CD8-positive, alpha-beta T cell (primary cell): ENCODE measurements at regions of chr1 and their contacts with region 1.

Region 1: GRCh38 chr1:19128968-19129514 is 81.0 kb downstream of the UBR4 start:
- DNase-seq: no peak
- ATAC-seq: no peak
- H3K4me3 ChIP-seq: no peak overlapping the region
- H3K4me3 Mint-ChIP-seq: no peak overlapping the region
- H3K27ac ChIP-seq: no peak overlapping the region
- H3K27ac Mint-ChIP-seq: no peak overlapping the region
- H3K4me1 ChIP-seq: peaks cover 9% of the 10 kb centered on the region
- H3K4me1 Mint-ChIP-seq: peaks cover 11% of the 10 kb centered on the region
- H3K27me3 ChIP-seq: no peaks in the 10 kb centered on the region
- H3K27me3 Mint-ChIP-seq: no peaks in the 10 kb centered on the region
- CTCF ChIP-seq: no peak

Region 2: DNA sequence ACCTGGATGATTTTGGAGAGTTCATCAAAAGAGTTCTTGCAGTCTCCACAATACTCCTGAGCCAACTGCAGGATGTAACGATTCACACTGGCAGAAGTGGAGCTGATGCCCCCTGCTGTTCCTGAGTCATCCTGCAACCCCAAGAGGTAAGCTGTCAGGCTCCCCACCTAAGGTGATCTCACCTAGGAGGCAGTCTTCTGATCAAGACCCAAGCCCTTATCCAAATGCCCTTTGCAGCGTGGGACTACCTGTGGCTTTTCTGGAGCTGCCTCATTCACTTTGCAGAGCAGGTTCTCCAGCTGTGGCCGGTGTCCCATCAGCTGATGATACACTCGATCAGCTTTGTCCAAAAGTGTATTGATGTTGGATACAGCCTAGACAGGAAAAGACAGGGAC is 15.3 kb before region 1 on chr1:
- CTCF ChIA-PET with region 1: interaction called, 10 read pairs
- POLR2A ChIA-PET with region 1: interaction called, 6 read pairs
- intact Hi-C with region 1: no loop called
- DNase-seq: peak in 7 of 9 experiments; percentile 8 to 54 (median 36)
- ATAC-seq: peak; percentile 65
- H3K4me3 ChIP-seq: no peak overlapping the region
- H3K4me3 Mint-ChIP-seq: no peak overlapping the region
- H3K27ac ChIP-seq: no peak overlapping the region
- H3K27ac Mint-ChIP-seq: no peak overlapping the region
- H3K4me1 ChIP-seq: no peaks in the 10 kb centered on the region
- H3K4me1 Mint-ChIP-seq: no peaks in the 10 kb centered on the region
- H3K27me3 ChIP-seq: no peaks in the 10 kb centered on the region
- H3K27me3 Mint-ChIP-seq: no peaks in the 10 kb centered on the region
- CTCF ChIP-seq: peak; percentile 36

Region 3: DNA sequence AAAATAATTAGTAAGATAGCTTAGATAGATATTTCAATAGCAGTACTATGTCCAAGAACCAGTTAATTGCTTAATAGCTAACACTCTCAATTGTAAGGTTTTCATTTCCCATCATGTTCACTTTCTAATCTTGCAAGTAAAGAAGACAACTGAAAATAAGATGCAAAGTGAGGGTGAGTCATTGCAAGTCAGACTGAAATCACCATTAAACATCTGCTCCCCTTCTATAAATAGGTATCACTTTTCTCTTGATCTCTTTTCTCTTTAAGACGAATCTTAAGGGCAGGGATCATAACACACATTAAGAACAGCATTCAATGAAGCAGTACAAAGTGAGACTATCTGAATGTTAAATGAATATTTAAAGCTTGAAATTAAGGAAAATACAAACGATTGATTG is 40.6 kb after region 1 on chr1:
- CTCF ChIA-PET with region 1: interaction called, 3 read pairs
- POLR2A ChIA-PET with region 1: no interaction called
- intact Hi-C with region 1: loop called in 1 of 2 experiments (anchors 5 kb)
- DNase-seq: no peak
- ATAC-seq: no peak
- H3K4me3 ChIP-seq: no peak overlapping the region
- H3K4me3 Mint-ChIP-seq: no peak overlapping the region
- H3K27ac ChIP-seq: no peak overlapping the region
- H3K27ac Mint-ChIP-seq: no peak overlapping the region
- H3K4me1 ChIP-seq: no peaks in the 10 kb centered on the region
- H3K4me1 Mint-ChIP-seq: no peaks in the 10 kb centered on the region
- H3K27me3 ChIP-seq: no peaks in the 10 kb centered on the region
- H3K27me3 Mint-ChIP-seq: no peaks in the 10 kb centered on the region
- CTCF ChIP-seq: no peak

Region 4: DNA sequence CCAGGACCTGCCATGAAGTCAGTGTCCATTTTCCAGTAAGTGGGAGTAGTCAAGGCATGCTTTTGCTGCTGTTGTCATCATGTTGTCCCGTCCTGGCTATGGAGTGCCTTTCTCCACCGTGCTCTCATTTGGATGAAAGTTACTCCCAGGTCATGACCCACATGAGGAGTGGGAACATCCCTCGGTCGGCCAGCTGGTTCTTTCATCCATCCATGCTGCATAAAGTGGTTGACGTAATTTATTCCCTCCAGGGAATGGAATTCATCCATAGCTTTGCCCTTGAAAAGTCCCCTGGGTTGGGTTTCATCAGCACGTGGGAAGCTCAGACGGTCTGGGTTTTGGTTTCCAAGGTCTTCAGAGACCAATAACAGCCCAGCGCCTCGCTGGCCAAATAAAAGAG is 838.8 kb after region 1 on chr1:
- CTCF ChIA-PET with region 1: no interaction called
- POLR2A ChIA-PET with region 1: no interaction called
- intact Hi-C with region 1: no loop called
- DNase-seq: no peak
- ATAC-seq: no peak
- H3K4me3 ChIP-seq: no peak overlapping the region
- H3K4me3 Mint-ChIP-seq: no peak overlapping the region
- H3K27ac ChIP-seq: no peak overlapping the region
- H3K27ac Mint-ChIP-seq: no peak overlapping the region
- H3K4me1 ChIP-seq: no peaks in the 10 kb centered on the region
- H3K4me1 Mint-ChIP-seq: no peaks in the 10 kb centered on the region
- H3K27me3 ChIP-seq: peaks cover 0 to 2% of the 10 kb centered on the region in 2 experiments
- H3K27me3 Mint-ChIP-seq: peaks cover 33% of the 10 kb centered on the region
- CTCF ChIP-seq: no peak